CD4-positive, alpha-beta T cell (primary cell): ENCODE measurements at regions of chr15 and their contacts with region 1.

Region 1: DNA sequence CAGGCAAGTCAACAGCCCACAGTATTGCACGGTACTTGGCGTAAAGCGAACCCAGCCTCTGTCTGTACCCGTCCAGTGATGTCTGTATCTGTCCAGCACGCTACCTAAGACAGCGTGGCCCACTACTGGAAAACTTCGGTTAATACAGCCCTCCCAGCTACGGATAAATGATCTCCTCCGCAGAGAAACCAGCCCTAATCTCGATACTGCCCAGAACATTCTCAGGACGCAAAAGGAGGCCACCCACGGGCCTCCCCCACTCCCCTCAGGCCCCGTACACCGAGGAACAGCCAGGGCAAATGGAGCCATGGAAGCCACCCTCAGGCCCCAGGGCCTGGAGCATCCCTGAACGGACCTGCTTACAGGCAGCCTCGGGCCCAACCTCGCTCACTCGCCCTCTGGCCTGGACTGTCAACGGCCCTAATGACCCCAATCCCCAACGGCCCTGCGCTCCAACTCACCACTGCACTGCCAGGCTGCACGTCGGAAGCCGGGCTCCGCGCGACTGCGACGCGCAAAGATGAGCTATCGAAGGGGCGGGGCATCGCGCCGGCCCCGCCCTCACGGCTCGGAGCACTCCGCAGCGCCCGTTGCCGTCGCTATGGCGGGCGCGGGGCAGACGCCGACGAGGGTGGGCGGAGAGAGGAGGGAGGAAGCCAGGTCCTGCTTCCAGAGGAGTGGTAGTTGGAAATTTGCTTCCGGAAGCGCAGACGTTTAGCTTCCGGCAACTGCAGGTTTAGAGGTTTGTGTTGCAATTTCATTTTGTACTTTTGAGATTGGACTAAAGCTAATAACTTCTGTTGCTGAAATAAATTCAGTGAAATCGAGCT is at the start of gene SKIC8:
- DNase-seq: peak; percentile 79 to 96 (median 87)
- ATAC-seq: peak; percentile 96
- H3K4me3 ChIP-seq: peak within 1 kb of the TSS; percentile 99
- H3K4me3 Mint-ChIP-seq: peak within 1 kb of the TSS; percentile 96
- H3K27ac ChIP-seq: peak within 1 kb of the TSS; percentile 50 to 77
- H3K27ac Mint-ChIP-seq: peak within 1 kb of the TSS; percentile 88
- H3K4me1 ChIP-seq: peaks cover 18% of the 10 kb centered on the region
- H3K4me1 Mint-ChIP-seq: peaks cover 30% of the 10 kb centered on the region
- H3K27me3 ChIP-seq: no peaks in the 10 kb centered on the region
- H3K27me3 Mint-ChIP-seq: no peaks in the 10 kb centered on the region
- CTCF ChIP-seq: no peak
- total RNA-seq, gene SKIC8: 13.3 to 16.7 TPM

Region 2: GRCh38 chr15:78018946-78019644 is 280.2 kb before region 1 on chr15:
- CTCF ChIA-PET with region 1: no interaction called
- POLR2A ChIA-PET with region 1: no interaction called
- intact Hi-C with region 1: no loop called
- DNase-seq: peak in 3 of 14 experiments; percentile 36 to 62 (median 57)
- ATAC-seq: peak; percentile 73
- H3K4me3 ChIP-seq: no peak overlapping the region
- H3K4me3 Mint-ChIP-seq: no peak overlapping the region
- H3K27ac ChIP-seq: no peak overlapping the region
- H3K27ac Mint-ChIP-seq: peak overlapping the region; percentile 73
- H3K4me1 ChIP-seq: peaks cover 4% of the 10 kb centered on the region
- H3K4me1 Mint-ChIP-seq: peaks cover 33% of the 10 kb centered on the region
- H3K27me3 ChIP-seq: no peaks in the 10 kb centered on the region
- H3K27me3 Mint-ChIP-seq: no peaks in the 10 kb centered on the region
- CTCF ChIP-seq: no peak

Region 3: GRCh38 chr15:78149068-78149804 is 150.1 kb before region 1 on chr15 and contains the start of gene IDH3A:
- CTCF ChIA-PET with region 1: no interaction called
- POLR2A ChIA-PET with region 1: interaction called, 5 read pairs
- intact Hi-C with region 1: loop called in 1 of 2 experiments (anchors 5 kb)
- DNase-seq: peak; percentile 99 to 100 (median 100)
- ATAC-seq: peak; percentile 94
- H3K4me3 ChIP-seq: peak within 1 kb of the TSS; percentile 69
- H3K4me3 Mint-ChIP-seq: peak within 1 kb of the TSS; percentile 97
- H3K27ac ChIP-seq: peak within 1 kb of the TSS in 1 of 2 donors; percentile 29
- H3K27ac Mint-ChIP-seq: peak within 1 kb of the TSS; percentile 91
- H3K4me1 ChIP-seq: peaks cover 27% of the 10 kb centered on the region
- H3K4me1 Mint-ChIP-seq: peaks cover 45% of the 10 kb centered on the region
- H3K27me3 ChIP-seq: no peaks in the 10 kb centered on the region
- H3K27me3 Mint-ChIP-seq: no peaks in the 10 kb centered on the region
- CTCF ChIP-seq: no peak
- total RNA-seq, gene IDH3A: 47.5 to 47.6 TPM

Region 4: GRCh38 chr15:78264304-78265136 is 34.8 kb before region 1 on chr15 and contains the start of gene DNAJA4:
- CTCF ChIA-PET with region 1: interaction called, 8 read pairs
- POLR2A ChIA-PET with region 1: interaction called, 63 read pairs
- intact Hi-C with region 1: loop called in 1 of 2 experiments (anchors 2 kb)
- DNase-seq: peak; percentile 39 to 86 (median 61)
- ATAC-seq: peak; percentile 77
- H3K4me3 ChIP-seq: peak within 1 kb of the TSS; percentile 70
- H3K4me3 Mint-ChIP-seq: peak within 1 kb of the TSS; percentile 89
- H3K27ac ChIP-seq: peak within 1 kb of the TSS; percentile 54 to 62
- H3K27ac Mint-ChIP-seq: peak within 1 kb of the TSS; percentile 94
- H3K4me1 ChIP-seq: peaks cover 27% of the 10 kb centered on the region
- H3K4me1 Mint-ChIP-seq: peaks cover 36% of the 10 kb centered on the region
- H3K27me3 ChIP-seq: no peaks in the 10 kb centered on the region
- H3K27me3 Mint-ChIP-seq: no peaks in the 10 kb centered on the region
- CTCF ChIP-seq: peak; percentile 27
- total RNA-seq, gene DNAJA4: 47.0 to 48.5 TPM

Region 5: DNA sequence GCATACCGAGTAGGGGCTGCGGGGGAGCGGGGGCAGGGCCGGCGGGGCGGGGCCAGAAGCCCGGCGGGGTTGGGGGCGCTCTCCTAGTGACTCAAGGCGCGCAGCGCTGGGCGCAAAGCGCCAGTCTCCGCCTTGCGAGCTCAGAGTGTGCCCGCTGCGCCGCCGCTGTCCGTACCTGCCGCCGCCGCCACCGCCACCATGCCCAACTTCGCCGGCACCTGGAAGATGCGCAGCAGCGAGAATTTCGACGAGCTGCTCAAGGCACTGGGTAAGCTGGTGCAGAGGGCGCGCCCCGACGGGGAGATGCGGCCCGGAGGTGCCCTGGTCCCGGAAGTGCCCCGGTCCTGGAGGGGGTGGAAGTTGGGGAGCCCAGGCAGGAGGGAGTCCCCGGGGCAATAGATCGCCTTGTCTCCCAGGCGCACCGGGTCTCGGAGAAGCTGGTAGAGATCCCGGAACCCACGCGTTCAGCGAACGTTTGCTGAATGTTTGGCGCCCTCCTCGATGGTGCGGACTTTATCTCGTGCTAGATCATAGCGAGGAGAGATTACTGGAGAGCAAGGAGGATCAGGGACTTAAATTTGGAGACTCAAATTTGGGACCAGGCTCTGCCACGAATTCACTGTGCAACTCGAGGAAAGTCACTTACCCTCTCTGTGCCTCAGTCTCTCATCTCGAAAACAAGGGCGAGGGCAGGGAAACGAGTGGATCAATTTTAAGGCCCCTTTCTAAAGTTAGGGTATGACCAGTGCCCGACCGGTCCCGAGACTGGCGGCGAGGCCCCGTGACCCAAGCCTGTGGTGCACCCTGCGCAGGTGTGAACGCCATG is 41.1 kb after region 1 on chr15 and contains the start of gene CRABP1:
- CTCF ChIA-PET with region 1: no interaction called
- POLR2A ChIA-PET with region 1: no interaction called
- intact Hi-C with region 1: no loop called
- DNase-seq: no peak
- ATAC-seq: no peak
- H3K4me3 ChIP-seq: no peak within 1 kb of the TSS
- H3K4me3 Mint-ChIP-seq: no peak within 1 kb of the TSS
- H3K27ac ChIP-seq: no peak within 1 kb of the TSS
- H3K27ac Mint-ChIP-seq: no peak within 1 kb of the TSS
- H3K4me1 ChIP-seq: peaks cover 7% of the 10 kb centered on the region
- H3K4me1 Mint-ChIP-seq: peaks cover 4% of the 10 kb centered on the region
- H3K27me3 ChIP-seq: peaks cover 30 to 60% of the 10 kb centered on the region in 2 experiments
- H3K27me3 Mint-ChIP-seq: peaks cover 55% of the 10 kb centered on the region
- CTCF ChIP-seq: no peak
- total RNA-seq, gene CRABP1: not detected

Region 6: DNA sequence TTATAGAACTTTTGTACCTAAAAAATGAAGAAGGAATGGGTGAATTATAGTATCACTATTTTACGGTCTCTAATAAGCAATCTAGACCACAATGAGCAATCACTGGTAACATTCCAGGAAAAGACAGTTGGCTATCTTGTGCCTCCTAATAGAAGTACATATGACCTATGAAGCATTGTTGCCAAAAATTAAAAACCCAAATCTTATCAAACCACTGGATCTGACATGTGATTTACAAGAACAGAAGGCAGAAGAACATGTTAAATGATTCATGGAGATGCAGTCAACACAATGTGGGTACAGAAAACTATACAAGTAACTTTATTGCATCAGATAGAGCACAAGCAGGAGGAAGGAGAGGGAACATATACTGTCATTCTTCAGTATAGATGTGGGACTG is 193.6 kb after region 1 on chr15:
- CTCF ChIA-PET with region 1: no interaction called
- POLR2A ChIA-PET with region 1: no interaction called
- intact Hi-C with region 1: no loop called
- DNase-seq: no peak
- ATAC-seq: no peak
- H3K4me3 ChIP-seq: no peak overlapping the region
- H3K4me3 Mint-ChIP-seq: no peak overlapping the region
- H3K27ac ChIP-seq: no peak overlapping the region
- H3K27ac Mint-ChIP-seq: peak overlapping the region; percentile 4
- H3K4me1 ChIP-seq: no peaks in the 10 kb centered on the region
- H3K4me1 Mint-ChIP-seq: peaks cover 14% of the 10 kb centered on the region
- H3K27me3 ChIP-seq: no peaks in the 10 kb centered on the region
- H3K27me3 Mint-ChIP-seq: no peaks in the 10 kb centered on the region
- CTCF ChIP-seq: no peak

Region 7: GRCh38 chr15:78506971-78507830 is 207.9 kb after region 1 on chr15 and contains the start of gene HYKK:
- CTCF ChIA-PET with region 1: interaction called, 3 read pairs
- POLR2A ChIA-PET with region 1: no interaction called
- intact Hi-C with region 1: loop called in 1 of 2 experiments (anchors 2 kb)
- DNase-seq: peak; percentile 33 to 87 (median 70)
- ATAC-seq: peak; percentile 84
- H3K4me3 ChIP-seq: peak within 1 kb of the TSS; percentile 75
- H3K4me3 Mint-ChIP-seq: peak within 1 kb of the TSS; percentile 93
- H3K27ac ChIP-seq: no peak within 1 kb of the TSS
- H3K27ac Mint-ChIP-seq: peak within 1 kb of the TSS; percentile 69
- H3K4me1 ChIP-seq: peaks cover 23% of the 10 kb centered on the region
- H3K4me1 Mint-ChIP-seq: peaks cover 36% of the 10 kb centered on the region
- H3K27me3 ChIP-seq: no peaks in the 10 kb centered on the region
- H3K27me3 Mint-ChIP-seq: no peaks in the 10 kb centered on the region
- CTCF ChIP-seq: no peak
- total RNA-seq, gene HYKK: 1.8 to 2.3 TPM